Heart left ventricle (tissue), 16 donors: ENCODE measurements at regions of chr16 and their contacts with region 1.

Region 1: DNA sequence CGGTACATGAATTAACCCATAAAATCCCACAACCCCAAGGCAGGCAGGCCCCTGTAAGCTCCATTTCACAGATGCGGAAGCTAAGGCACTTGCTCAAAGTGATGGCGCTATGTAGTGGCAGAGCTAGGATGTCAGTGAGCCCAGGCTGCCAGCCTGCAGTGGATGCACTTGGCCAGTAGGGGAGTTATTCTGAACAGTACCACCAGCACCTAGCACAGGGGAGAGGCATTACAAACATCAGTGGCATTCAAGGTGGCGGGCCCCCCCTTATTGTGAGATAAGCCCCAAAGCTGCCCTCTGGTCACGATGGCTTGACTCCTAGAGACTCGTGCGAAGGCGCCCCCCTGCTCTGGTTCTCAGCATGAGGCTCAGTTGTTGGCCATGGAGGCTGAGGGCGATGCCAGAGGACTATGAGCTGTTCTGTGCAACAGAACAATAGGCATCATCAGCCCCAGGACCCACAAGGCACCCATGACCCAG is 33.8 kb downstream of the GTF3C1 start:
- DNase-seq: peak in 2 of 5 donors; percentile 34 to 54
- ATAC-seq: peak; percentile 12 to 53 (median 34)
- H3K4me3 ChIP-seq: no peak overlapping the region
- H3K27ac ChIP-seq: peak overlapping the region in 11 of 12 donors; percentile 1 to 89 (median 65)
- H3K4me1 ChIP-seq: peaks cover 0 to 52% (median 26%) of the 10 kb centered on the region in 12 donors
- H3K27me3 ChIP-seq: no peaks in the 10 kb centered on the region
- CTCF ChIP-seq: peak; percentile 26 to 66 (median 53)
- POLR2A ChIP-seq: no peak

Region 2: GRCh38 chr16:27566417-27566816 is 50.5 kb after region 1 on chr16:
- intact Hi-C with region 1: loop called in 1 of 10 experiments (anchors 5 kb)
- DNase-seq: no peak
- ATAC-seq: no peak
- H3K4me3 ChIP-seq: no peak overlapping the region
- H3K27ac ChIP-seq: no peak overlapping the region
- H3K4me1 ChIP-seq: peaks cover 0 to 21% (median 0%) of the 10 kb centered on the region in 12 donors
- H3K27me3 ChIP-seq: no peaks in the 10 kb centered on the region
- CTCF ChIP-seq: no peak
- POLR2A ChIP-seq: no peak

Region 3: DNA sequence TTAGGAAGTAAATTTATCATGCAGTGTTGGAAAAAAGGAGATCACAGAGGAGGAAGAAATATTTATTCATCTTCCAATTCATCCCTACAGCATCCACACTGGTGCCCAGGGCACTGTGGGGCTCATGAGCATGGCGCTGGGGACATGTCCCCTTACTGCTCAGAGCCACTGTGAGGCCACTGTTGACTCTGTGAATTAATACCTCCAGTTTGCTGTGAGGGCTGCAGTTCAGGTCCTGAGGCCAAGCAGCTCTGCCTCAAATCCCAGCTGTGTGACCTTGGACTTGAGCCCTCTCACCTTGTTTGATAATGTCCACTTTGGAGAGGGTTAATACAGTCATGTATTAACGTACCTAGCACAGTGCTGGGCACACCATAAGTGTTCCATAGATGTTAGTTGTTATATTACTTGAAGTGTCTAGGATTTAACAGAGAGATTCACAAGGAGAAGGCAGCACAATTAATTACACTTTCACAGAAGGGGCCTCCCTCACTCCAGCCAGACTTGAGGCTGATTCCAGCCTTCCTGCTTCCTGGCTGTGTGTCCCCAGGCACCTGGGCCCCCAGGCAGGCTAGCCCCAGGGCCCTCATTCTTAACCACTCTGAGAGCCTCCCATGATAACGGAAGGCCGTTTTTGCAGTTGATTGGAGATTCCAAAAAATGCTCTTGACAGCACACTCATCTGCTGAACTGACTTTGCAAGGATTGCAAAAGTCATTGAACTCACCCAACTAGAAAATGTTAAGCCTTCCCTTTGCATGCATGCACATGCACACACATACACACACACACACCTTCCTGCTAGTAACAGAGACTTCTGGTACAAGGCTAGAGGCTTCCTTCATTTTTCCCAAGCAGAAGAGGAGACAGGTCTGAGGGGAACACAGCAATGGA is 63.4 kb after region 1 on chr16:
- intact Hi-C with region 1: loop called in 1 of 10 experiments (anchors 2 kb)
- DNase-seq: no peak
- ATAC-seq: peak in 1 of 4 donors; percentile 22
- H3K4me3 ChIP-seq: no peak overlapping the region
- H3K27ac ChIP-seq: no peak overlapping the region
- H3K4me1 ChIP-seq: peaks cover 0 to 9% (median 0%) of the 10 kb centered on the region in 12 donors
- H3K27me3 ChIP-seq: no peaks in the 10 kb centered on the region
- CTCF ChIP-seq: no peak
- POLR2A ChIP-seq: no peak